ENCODE measurements at regions of chr19 and their contacts with region 1.

Region 1: GRCh38 chr19:15323496-15324227 is 8.7 kb downstream of the BRD4 start:
- DNase-seq: peak; percentile 36 to 76
- ATAC-seq: peak; percentile 46 to 82 (median 71)
- H3K4me3 ChIP-seq: no peak overlapping the region
- H3K27ac ChIP-seq: peak overlapping the region; percentile 48
- H3K4me1 ChIP-seq: peaks cover 93% of the 10 kb centered on the region
- H3K27me3 ChIP-seq: no peaks in the 10 kb centered on the region
- CTCF ChIP-seq: no peak

Region 2: DNA sequence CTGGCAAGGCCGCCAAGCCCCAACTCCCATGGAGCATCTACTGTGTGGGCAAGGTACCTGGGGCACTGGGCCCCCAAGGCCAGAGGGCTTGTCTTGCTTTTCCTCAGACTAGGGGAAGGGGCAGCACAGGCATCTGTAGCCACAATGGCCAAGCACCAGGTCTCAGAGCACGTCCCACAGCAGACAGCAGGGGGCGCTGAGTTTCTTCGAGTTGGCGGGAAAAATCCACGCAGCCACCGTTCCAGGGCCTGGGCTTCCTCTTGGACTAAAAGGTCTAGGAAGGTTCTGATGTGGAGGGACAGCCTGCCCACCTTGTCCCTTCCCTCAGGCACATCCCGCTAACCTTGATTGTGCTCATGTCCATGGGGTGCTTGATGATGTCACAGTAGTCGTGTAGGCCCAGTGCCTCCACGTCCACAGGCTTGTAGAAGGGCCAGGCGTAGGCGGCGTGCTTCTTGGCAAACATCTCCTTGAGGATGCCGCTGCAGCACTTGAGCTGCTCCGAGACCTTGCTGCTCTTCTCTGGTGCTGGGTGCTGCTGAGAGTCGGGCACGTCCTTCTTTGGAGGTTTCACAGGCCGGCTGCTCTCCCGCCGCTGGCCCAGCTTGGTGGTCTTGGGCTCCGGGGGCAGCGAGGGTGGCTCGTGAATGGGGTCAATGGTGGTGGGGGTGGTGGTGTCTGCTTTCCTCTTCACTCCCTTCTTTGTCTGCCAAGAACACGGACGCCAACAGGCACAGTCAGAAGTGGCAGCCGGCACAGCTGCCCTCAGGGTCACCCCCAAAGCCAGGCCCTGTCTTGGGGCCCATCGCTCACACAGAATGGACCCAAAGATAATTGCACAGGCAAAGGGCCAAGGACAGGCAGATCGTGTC is 59.4 kb before region 1 on chr19:
- intact Hi-C with region 1: loop called in 1 of 2 experiments (anchors 10 kb)
- DNase-seq: peak; percentile 79 to 88
- ATAC-seq: peak; percentile 34 to 59 (median 40)
- H3K4me3 ChIP-seq: no peak overlapping the region
- H3K27ac ChIP-seq: peak overlapping the region; percentile 78
- H3K4me1 ChIP-seq: peaks cover 51% of the 10 kb centered on the region
- H3K27me3 ChIP-seq: no peaks in the 10 kb centered on the region
- CTCF ChIP-seq: peak; percentile 67

Measured in psoas muscle (tissue), 8 donors.